ENCODE measurements at regions of chr22 and their contacts with region 1.

Region 1: DNA sequence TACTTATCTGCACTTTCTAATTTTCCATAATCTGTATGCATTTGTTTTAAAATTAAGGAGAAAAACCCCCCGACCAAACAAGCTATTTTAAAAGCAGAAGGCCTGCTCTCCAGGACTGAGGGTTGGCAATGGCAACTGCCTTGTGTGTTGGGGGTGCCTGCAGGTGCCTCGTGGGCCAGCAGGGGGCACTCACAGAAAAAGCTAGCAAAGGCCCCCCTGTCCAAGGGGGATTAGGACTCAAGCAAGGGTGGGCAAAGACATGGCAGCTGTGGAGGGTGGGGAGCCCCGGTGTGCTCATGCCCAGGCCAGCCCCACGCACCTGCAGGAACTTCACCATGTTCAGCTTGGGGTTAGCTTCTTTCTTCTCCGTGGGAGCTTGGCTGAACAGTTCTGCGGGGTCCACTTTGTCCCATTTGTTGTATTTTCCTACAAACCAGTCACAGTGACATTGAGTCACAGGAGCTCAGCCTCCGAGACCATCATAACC is 10.3 kb downstream of the TOP3B start:
- DNase-seq: no peak
- H3K4me3 ChIP-seq: no peak overlapping the region
- H3K27ac ChIP-seq: no peak overlapping the region
- H3K27me3 ChIP-seq: no peaks in the 10 kb centered on the region
- CTCF ChIP-seq: peak; percentile 83

Region 2: DNA sequence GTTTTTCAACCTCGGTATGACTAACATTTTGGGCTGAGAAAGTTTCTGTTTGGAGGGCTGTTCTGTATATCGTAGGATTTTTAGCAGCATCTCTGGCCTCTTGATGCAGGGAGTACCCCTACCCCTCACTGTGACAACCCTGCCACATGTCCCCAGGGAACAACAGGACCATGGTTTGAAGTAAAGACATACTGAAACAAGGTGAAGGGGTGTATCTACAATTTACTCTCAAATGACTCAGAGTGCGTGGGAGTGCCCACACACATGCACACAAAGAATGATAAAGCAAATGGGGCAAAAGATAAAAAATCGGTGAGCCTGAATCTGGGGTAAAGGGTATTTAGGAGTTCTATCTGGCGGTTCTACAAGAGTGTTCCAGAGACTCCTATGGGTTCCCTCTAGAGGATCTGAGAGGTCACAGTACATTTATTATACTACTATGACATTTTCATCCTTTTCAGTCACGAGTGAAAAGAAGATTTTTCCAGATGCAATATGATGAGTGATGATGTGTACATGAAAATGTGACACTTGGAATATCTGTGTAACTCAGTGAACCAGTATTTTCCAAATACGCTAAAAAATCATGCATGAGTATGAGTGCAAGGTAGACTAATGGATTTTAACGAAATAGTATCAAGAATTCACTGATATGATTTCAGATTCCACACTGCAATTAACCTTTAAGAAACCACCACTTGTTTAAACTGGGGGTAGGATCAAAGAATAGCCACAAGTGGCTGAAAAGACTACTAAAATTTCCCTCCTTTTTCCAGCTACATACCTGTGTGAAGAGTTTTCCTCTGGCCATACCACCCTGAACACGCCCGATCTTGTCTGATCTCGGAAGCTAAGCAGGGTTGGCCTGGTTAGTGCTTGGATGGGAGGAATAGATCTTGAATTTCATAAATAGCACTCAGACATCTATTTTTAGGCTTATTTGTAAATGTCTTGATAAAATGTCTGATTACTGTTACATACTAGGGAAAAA is 180.4 kb before region 1 on chr22:
- CTCF ChIA-PET with region 1: no interaction called
- POLR2A ChIA-PET with region 1: no interaction called
- DNase-seq: no peak
- H3K4me3 ChIP-seq: no peak overlapping the region
- H3K27ac ChIP-seq: peak overlapping the region; percentile 52
- H3K27me3 ChIP-seq: no peaks in the 10 kb centered on the region
- CTCF ChIP-seq: peak; percentile 12; the same call in 1 of the 2 replicates

Region 3: DNA sequence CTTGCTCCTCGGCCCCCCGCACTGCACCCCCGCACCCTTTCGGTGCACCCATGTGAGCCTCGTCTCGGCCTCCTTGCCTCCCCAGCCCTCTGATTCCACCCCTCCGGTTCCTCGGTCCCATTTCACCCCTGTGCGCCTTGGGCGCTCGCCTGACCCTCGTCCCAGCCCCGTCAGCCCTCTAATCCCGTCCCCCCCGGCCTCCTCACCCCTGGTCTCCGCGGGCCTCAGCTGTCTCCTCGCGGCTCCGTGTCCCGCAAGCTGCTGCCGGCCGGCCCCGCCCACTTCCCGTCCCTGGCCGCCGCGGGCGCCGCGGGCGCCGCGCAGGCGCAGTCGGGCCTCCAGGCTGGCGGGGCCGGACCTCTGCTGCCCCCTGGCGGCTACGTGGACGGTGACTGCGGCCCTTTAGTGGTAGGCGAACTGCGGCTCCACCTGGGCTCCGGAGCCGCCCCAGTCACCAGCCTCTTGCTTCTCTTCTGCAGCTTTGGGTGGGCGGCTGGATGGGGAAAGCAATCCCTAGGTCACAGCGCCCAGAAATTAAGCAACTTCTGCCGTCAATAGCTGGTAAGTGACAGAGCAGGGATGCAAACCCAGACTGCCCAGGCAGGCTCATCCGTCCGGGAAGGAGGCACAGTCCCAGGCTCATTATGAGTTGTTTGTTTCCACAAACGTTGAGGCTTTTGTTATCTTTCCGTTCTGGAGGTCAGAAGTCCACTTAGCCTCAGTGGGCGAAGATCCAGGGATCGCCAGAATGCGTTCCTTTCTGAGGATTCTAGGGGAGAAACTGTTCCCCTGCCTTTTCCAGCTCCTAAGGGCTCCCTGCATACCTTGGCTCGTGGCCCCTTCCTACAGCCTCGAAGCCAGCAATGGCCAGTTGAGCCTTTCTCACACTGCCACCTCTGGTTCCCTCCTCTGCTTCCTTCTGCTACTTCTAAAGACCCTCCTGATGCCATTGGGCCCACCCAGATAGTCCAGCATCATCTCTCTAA is 19.5 kb before region 1 on chr22 and contains the start of gene PPM1F:
- CTCF ChIA-PET with region 1: interaction called, 20 read pairs
- POLR2A ChIA-PET with region 1: no interaction called
- DNase-seq: peak; percentile 20
- H3K4me3 ChIP-seq: peak within 1 kb of the TSS; percentile 76
- H3K27ac ChIP-seq: no peak within 1 kb of the TSS
- H3K27me3 ChIP-seq: no peaks in the 10 kb centered on the region
- CTCF ChIP-seq: peak; percentile 64
- polyA plus RNA-seq, gene PPM1F: 17.7 and 21.2 TPM in 2 replicates

Region 4: DNA sequence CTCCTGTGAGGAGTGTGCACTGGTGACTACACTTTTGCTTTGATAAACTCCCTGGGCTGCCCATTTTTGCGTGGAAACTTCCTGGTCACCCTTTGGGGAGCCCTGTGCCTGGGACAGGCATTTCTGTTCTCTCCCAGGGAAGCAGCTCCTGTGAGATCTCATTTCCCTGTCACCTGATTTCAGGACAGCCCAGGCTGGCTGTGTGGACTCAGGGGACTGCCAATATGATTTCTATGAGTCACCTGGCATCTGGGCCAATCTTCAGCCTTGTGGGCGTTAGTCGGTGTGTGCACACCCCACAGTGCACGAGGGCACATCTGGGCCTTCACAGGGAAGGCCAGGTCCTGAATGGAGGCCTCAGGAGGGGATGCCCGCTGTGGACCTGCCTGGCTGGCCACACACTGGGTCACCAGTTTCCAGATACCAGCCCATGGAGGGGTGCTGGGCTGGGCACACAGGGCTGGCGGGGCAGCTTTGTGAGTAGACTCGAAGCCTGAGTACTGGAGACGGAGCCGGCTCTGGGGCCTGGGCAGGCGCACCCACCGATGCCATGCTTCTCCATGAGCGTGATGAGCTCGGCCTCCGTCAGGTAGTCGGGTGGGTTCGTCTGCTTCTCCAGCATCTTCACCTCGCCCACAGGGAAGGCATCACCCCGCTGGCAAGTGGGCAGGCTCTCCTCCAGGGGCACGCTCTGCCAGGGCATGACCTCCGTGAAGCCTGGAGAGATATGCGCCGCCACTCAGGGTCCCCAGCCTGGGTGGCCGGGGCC is 10.3 kb before region 1 on chr22:
- CTCF ChIA-PET with region 1: interaction called, 15 read pairs
- POLR2A ChIA-PET with region 1: no interaction called
- DNase-seq: peak; percentile 13
- H3K4me3 ChIP-seq: no peak overlapping the region
- H3K27ac ChIP-seq: no peak overlapping the region
- H3K27me3 ChIP-seq: no peaks in the 10 kb centered on the region
- CTCF ChIP-seq: no peak

Region 5: DNA sequence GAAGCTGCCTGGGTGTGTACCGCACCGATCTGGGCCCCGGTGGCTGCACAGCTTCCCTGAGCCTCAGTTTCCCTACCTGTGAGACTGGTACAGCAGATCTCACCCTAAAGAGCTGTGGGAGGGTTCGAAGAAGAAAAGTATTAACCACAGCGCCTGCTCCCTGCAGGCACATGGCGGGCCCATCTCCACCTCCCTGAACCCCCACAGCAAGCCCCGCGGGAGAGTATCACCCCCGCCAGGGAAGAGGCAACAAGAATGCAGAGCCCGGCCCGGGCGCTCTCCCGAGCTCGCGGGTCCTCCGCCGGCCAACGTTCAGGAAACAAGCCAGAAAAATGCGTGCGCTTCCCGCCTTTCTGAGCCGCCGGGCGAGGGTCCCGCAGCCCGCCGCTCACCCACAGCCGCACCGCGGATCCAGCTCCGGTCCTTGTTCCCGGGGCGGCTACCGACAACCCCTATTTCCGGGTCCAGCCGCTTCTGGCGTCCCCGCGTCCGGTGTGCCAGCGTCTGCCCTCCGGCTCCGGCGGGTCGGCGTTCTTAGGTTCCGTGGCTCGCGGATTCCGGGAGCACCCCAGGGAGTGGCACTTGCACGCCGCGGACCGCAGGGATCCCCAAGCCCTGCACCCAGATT is 10.1 kb after region 1 on chr22 and contains the start of gene TOP3B:
- CTCF ChIA-PET with region 1: interaction called, 30 read pairs
- POLR2A ChIA-PET with region 1: interaction called, 4 read pairs
- DNase-seq: peak; percentile 27
- H3K4me3 ChIP-seq: peak within 1 kb of the TSS; percentile 92
- H3K27ac ChIP-seq: no peak within 1 kb of the TSS
- H3K27me3 ChIP-seq: peaks cover 3% of the 10 kb centered on the region
- CTCF ChIP-seq: no peak
- polyA plus RNA-seq, gene TOP3B: 10.3 and 13.2 TPM in 2 replicates

Region 6: GRCh38 chr22:22074634-22075381 is 102.5 kb after region 1 on chr22:
- CTCF ChIA-PET with region 1: no interaction called
- POLR2A ChIA-PET with region 1: no interaction called
- DNase-seq: no peak
- H3K4me3 ChIP-seq: no peak overlapping the region
- H3K27ac ChIP-seq: no peak overlapping the region
- H3K27me3 ChIP-seq: peaks cover 14% of the 10 kb centered on the region
- CTCF ChIP-seq: no peak